Gastrocnemius medialis (tissue), 4 donors: ENCODE measurements at regions of chr19 and their contacts with region 1.

Region 1: GRCh38 chr19:17605761-17606745 is 50.6 kb downstream of the COLGALT1 start:
- DNase-seq: peak; percentile 12 to 21
- ATAC-seq: peak in 1 of 2 donors; percentile 44
- H3K4me3 ChIP-seq: peak overlapping the region; percentile 16 to 52 (median 38)
- H3K27ac ChIP-seq: no peak overlapping the region
- H3K4me1 ChIP-seq: no peaks in the 10 kb centered on the region
- H3K27me3 ChIP-seq: peaks cover 28 to 41% (median 29%) of the 10 kb centered on the region in 3 donors
- CTCF ChIP-seq: peak in 4 of 5 experiments; percentile 23 to 60 (median 33)
- POLR2A ChIP-seq: no peak

Region 2: GRCh38 chr19:17580470-17581000 is 25.5 kb before region 1 on chr19:
- in situ Hi-C with region 1: no loop called
- intact Hi-C with region 1: no loop called
- DNase-seq: no peak
- ATAC-seq: no peak
- H3K4me3 ChIP-seq: no peak overlapping the region
- H3K27ac ChIP-seq: no peak overlapping the region
- H3K4me1 ChIP-seq: no peaks in the 10 kb centered on the region
- H3K27me3 ChIP-seq: no peaks in the 10 kb centered on the region
- CTCF ChIP-seq: no peak
- POLR2A ChIP-seq: no peak

Region 3: GRCh38 chr19:17692566-17692965 is 86.5 kb after region 1 on chr19:
- in situ Hi-C with region 1: no loop called
- intact Hi-C with region 1: no loop called
- DNase-seq: no peak
- ATAC-seq: no peak
- H3K4me3 ChIP-seq: no peak overlapping the region
- H3K27ac ChIP-seq: no peak overlapping the region
- H3K4me1 ChIP-seq: no peaks in the 10 kb centered on the region
- H3K27me3 ChIP-seq: peaks cover 28 to 44% (median 29%) of the 10 kb centered on the region in 3 donors
- CTCF ChIP-seq: no peak
- POLR2A ChIP-seq: no peak

Region 4: DNA sequence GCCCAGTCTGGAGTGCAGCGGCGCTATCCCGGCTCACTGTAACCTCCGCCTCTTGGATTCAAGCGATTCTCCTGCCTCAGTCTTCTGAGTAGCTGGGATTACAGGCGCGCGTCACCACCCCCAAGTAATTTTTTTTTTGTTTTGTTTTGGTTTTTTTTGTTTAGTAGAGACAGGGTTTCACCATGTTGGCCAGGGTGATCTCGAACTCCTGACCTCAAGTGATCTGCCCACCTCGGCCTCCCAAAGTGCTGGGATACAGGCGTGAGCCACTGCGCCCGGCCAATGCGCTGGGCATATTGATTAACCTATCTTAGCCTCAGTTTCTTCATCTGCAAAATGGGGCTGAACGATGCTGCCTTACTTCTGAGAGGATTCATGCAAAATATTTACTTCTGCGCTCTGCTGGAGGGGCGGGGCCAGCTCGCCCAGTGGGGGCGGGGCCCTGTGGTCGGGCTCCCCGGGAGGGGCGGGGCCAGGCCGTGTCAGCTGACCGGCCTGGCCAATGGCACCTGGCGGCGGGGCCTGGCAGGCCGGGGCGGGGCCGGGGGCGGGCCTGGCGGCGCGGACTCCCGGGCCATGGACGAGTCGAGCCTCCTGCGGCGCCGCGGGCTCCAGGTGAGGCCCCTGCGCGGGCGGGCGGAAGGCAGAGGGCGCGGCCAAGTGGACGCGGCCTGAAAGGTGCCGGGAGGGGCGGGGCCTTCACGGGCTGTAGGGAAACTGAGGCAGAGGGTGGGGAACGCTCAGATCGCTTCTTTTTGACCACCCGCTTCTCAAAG is 491.4 kb after region 1 on chr19 and contains the start of gene MAST3:
- in situ Hi-C with region 1: loop called in 1 of 4 experiments (anchors 25 kb)
- intact Hi-C with region 1: no loop called
- DNase-seq: peak; percentile 45 to 65
- ATAC-seq: peak; percentile 53 to 56
- H3K4me3 ChIP-seq: peak within 1 kb of the TSS in 2 of 4 donors; percentile 28 to 42
- H3K27ac ChIP-seq: no peak within 1 kb of the TSS
- H3K4me1 ChIP-seq: peaks cover 0 to 5% of the 10 kb centered on the region in 2 donors
- H3K27me3 ChIP-seq: peaks cover 36 to 67% (median 44%) of the 10 kb centered on the region in 3 donors
- CTCF ChIP-seq: no peak
- POLR2A ChIP-seq: no peak
- total RNA-seq, gene MAST3: 0.66 to 2.8 (median 1.6) TPM